PC-9 (cell line): ENCODE measurements at regions of chr2 and their contacts with region 1.

Region 1: DNA sequence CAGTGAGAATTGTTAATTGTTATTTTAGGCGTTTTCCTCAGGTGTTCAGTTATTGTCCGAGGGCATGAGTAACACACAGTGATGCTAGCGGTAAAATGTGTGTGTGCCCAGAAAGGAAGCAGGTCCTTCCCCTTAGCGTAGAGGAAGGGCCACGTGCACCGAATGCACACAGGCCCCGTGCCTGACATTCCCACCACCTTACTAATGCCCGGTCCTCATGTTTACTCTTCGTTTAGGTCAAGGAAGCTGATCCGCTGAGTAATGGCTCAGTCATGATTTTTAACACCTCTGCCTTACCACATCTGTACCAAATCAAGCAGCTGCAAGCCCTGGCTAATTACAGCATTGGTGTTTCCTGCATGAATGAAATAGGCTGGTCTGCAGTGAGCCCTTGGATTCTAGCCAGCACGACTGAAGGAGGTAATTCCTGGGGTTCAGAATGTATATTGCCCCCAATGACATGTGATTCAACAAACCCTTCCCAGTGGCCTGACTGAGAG is 76.7 kb downstream of the MERTK start:
- DNase-seq: peak; percentile 91 to 99
- H3K4me3 ChIP-seq: no peak overlapping the region
- H3K27ac ChIP-seq: peak overlapping the region; percentile 67
- H3K4me1 ChIP-seq: peaks cover 38% of the 10 kb centered on the region
- H3K27me3 ChIP-seq: no peaks in the 10 kb centered on the region
- CTCF ChIP-seq: no peak

Region 2: GRCh38 chr2:111946294-111947114 is 28.6 kb before region 1 on chr2:
- CTCF ChIA-PET with region 1: no interaction called
- POLR2A ChIA-PET with region 1: no interaction called
- intact Hi-C with region 1: loop called (anchors 1 kb)
- DNase-seq: peak; percentile 74 to 100
- H3K4me3 ChIP-seq: peak overlapping the region; percentile 25; the same call in 1 of the 2 replicates
- H3K27ac ChIP-seq: peak overlapping the region; percentile 92
- H3K4me1 ChIP-seq: peaks cover 28% of the 10 kb centered on the region
- H3K27me3 ChIP-seq: no peaks in the 10 kb centered on the region
- CTCF ChIP-seq: no peak

Region 3: DNA sequence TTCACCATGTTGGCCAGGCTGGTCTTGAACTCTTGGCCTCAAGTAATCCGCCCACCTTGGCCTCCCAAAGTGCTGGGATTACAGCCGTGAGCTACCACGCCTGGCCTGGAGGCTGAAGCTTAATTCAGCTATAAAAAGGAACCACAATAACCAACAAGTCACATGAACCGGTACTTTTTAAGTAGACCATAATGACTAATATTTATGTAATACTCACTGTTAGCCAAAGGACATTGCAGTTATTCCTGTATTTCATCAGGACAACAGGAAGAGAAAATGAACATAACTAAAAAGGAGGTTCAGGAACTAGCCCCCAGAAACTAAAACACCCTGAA is 30.9 kb after region 1 on chr2:
- CTCF ChIA-PET with region 1: no interaction called
- POLR2A ChIA-PET with region 1: no interaction called
- intact Hi-C with region 1: no loop called
- DNase-seq: peak in 1 of 2 experiments; percentile 78
- H3K4me3 ChIP-seq: no peak overlapping the region
- H3K27ac ChIP-seq: peak overlapping the region; percentile 76
- H3K4me1 ChIP-seq: peaks cover 33% of the 10 kb centered on the region
- H3K27me3 ChIP-seq: no peaks in the 10 kb centered on the region
- CTCF ChIP-seq: no peak

Region 4: DNA sequence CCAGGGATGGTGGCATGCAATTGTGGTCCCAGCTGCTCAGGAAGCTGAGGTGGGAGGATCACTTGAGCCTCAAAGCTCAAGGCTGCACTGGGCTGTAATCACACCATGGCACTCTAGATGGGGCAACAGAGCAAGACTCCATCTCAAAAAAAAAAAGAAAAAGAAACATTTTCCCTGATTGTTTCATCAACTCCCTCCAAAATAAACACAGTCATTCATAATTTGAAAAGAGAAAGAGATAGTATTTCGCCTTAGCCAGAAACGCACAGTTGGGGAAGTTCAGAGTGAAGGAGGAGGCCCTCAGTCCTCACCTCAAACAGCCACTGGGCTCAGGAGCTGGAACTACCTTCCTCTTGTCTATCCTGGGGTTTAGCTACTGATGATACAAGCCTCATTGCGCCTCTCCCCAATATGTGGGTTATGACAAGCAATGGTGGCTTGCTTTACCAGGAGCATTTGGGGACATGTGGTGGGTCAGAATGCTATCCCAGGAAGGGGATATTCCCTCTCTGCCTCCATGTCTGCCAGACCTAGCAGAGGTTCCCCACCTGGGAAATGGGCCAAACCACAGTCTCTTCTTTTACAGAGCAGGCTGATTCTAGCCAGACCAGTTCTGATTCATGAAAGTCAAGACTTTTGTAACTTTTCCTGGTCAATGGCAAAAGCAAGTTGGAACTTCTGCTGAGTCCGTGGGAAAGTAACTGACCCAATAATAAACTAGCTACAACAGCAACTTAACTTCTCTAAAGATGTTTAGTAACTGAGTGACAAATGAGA is 57.8 kb after region 1 on chr2:
- CTCF ChIA-PET with region 1: no interaction called
- POLR2A ChIA-PET with region 1: no interaction called
- intact Hi-C with region 1: loop called (anchors 5 kb)
- DNase-seq: peak; percentile 66 to 92
- H3K4me3 ChIP-seq: 0 out of 2 replicates have a peak overlapping the region, but pooled peaks have one; percentile 9
- H3K27ac ChIP-seq: peak overlapping the region; percentile 79
- H3K4me1 ChIP-seq: peaks cover 39% of the 10 kb centered on the region
- H3K27me3 ChIP-seq: no peaks in the 10 kb centered on the region
- CTCF ChIP-seq: peak; percentile 48; the same call in 1 of the 2 replicates